SK-N-SH (cell line): ENCODE measurements at regions of chr2 and their contacts with region 1.

Region 1: GRCh38 chr2:26846328-26847306 is 1.3 kb upstream of the DPYSL5 start:
- DNase-seq: peak; percentile 86
- H3K4me3 ChIP-seq: peak overlapping the region; percentile 18 to 61; a peak in 2 of 4 replicates
- H3K27ac ChIP-seq: no peak overlapping the region
- H3K4me1 ChIP-seq: peaks cover 0 to 30% of the 10 kb centered on the region in 2 experiments; a peak in 2 of 4 replicates
- H3K27me3 ChIP-seq: peaks cover 79% of the 10 kb centered on the region
- CTCF ChIP-seq: peak; percentile 91
- EP300 ChIP-seq: no peak
- RAD21 ChIP-seq: peak; percentile 98

Region 2: DNA sequence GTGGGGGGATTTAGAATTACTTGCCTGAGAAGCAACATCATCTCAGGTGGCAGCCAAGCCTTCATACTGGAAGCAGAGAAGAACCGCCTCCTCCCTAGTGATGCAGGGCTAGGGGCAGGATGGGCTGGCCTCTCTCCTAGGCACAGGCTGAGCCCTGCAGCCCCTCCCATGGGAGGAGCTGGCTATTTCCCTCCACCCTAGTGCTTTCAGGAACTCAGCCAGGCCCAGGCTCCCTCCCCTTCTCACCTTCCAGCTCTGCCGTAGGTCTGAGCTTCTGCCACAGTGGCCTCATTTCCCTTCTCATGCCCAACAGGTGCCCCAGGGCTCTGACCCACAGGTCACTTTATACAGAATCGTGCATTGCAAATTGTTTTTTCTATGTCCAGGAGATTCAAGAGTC is 29.7 kb before region 1 on chr2:
- CTCF ChIA-PET with region 1: interaction called, 23 read pairs
- POLR2A ChIA-PET with region 1: no interaction called
- DNase-seq: peak; percentile 51
- H3K4me3 ChIP-seq: no peak overlapping the region
- H3K27ac ChIP-seq: no peak overlapping the region
- H3K4me1 ChIP-seq: no peaks in the 10 kb centered on the region; a peak in 1 of 4 replicates
- H3K27me3 ChIP-seq: no peaks in the 10 kb centered on the region
- CTCF ChIP-seq: no peak
- EP300 ChIP-seq: no peak
- RAD21 ChIP-seq: no peak

Region 3: GRCh38 chr2:26911911-26912861 is 65.6 kb after region 1 on chr2:
- CTCF ChIA-PET with region 1: interaction called, 779 read pairs
- POLR2A ChIA-PET with region 1: interaction called, 43 read pairs
- DNase-seq: peak; percentile 83
- H3K4me3 ChIP-seq: peak overlapping the region in 1 of 2 experiments; percentile 19; a peak in 1 of 4 replicates
- H3K27ac ChIP-seq: peak overlapping the region in 1 of 2 experiments; percentile 98; a peak in 2 of 4 replicates
- H3K4me1 ChIP-seq: peaks cover 3 to 45% of the 10 kb centered on the region in 2 experiments; a peak in 3 of 4 replicates
- H3K27me3 ChIP-seq: peaks cover 32% of the 10 kb centered on the region; the same call in 1 of the 2 replicates
- CTCF ChIP-seq: no peak
- EP300 ChIP-seq: peak in 1 of 2 experiments; percentile 86; a peak in 2 of 4 replicates
- RAD21 ChIP-seq: peak; percentile 13; the same call in 1 of the 2 replicates

Region 4: DNA sequence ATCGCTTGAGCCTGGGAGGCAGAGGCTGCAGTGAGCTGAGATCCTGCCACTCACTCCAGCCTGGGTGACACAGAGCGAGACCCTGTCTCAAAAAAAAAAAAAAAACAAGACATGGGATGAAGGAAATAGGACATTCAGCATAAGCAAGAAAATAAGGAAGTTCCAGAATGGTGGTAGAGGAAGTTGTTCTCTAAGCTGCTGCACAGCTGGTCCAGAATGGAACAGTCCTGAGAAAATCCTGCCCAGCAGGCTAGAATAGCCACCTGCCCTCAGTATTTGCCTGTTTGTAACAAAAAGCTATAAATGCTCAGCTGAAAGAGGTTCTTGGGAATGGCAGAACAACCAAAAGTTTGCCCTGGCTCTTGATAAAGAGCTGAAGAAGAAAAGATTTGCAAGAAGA is 112.7 kb after region 1 on chr2:
- CTCF ChIA-PET with region 1: interaction called, 388 read pairs
- POLR2A ChIA-PET with region 1: interaction called, 3 read pairs
- DNase-seq: no peak
- H3K4me3 ChIP-seq: no peak overlapping the region
- H3K27ac ChIP-seq: no peak overlapping the region
- H3K4me1 ChIP-seq: peaks cover 0 to 3% of the 10 kb centered on the region in 2 experiments; a peak in 1 of 4 replicates
- H3K27me3 ChIP-seq: peaks cover 48% of the 10 kb centered on the region
- CTCF ChIP-seq: no peak
- EP300 ChIP-seq: no peak
- RAD21 ChIP-seq: no peak

Region 5: DNA sequence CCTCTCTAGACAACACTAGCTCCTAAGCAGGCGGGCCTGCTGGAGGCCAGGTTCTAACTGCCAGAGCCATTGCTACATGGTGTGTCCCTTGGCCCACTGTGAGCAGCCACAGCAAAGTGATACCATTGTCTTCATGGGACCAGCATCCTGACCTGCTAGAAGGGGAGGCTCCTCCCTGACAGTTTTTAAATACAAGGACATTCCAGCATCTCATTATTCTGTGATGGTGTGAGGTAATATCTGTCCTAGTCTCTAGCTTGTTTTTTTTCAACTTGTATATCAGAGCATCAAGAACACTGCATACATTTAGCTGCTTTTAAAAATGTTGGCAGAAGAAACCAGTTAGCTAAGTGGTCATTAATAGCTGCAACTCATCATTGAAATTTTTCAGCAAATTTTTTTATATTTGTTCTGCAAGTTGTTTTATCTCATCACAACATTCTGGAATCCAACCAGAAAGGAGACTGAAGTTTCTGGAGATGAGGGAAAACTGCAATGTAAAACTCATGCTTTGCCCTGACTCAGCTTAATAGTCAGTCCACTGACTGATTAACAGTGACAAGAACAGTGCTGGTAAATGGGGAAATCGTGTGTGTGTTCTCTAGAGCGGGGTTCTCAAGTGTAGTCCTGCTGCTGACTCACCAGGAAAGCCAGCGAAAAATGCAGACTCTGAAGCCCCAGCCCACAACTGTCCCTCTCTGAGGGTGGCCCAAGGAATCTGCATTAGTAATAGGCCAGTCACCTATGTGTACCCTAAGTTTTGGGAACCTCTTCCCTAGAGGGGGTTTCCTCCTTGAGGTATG is 141.6 kb after region 1 on chr2:
- CTCF ChIA-PET with region 1: interaction called, 16 read pairs
- POLR2A ChIA-PET with region 1: no interaction called
- DNase-seq: no peak
- H3K4me3 ChIP-seq: no peak overlapping the region
- H3K27ac ChIP-seq: peak overlapping the region in 1 of 2 experiments; percentile 72; a peak in 2 of 4 replicates
- H3K4me1 ChIP-seq: peaks cover 0 to 17% of the 10 kb centered on the region in 2 experiments; a peak in 3 of 4 replicates
- H3K27me3 ChIP-seq: no peaks in the 10 kb centered on the region
- CTCF ChIP-seq: no peak
- EP300 ChIP-seq: peak in 1 of 2 experiments; percentile 83; a peak in 1 of 4 replicates
- RAD21 ChIP-seq: no peak

Region 6: GRCh38 chr2:27024188-27024587 is 177.6 kb after region 1 on chr2:
- CTCF ChIA-PET with region 1: interaction called, 86 read pairs
- POLR2A ChIA-PET with region 1: interaction called, 3 read pairs
- DNase-seq: peak; percentile 53
- H3K4me3 ChIP-seq: no peak overlapping the region
- H3K27ac ChIP-seq: no peak overlapping the region
- H3K4me1 ChIP-seq: peaks cover 0 to 8% of the 10 kb centered on the region in 2 experiments; a peak in 1 of 4 replicates
- H3K27me3 ChIP-seq: no peaks in the 10 kb centered on the region
- CTCF ChIP-seq: peak; percentile 20
- EP300 ChIP-seq: no peak
- RAD21 ChIP-seq: no peak

Region 7: GRCh38 chr2:27191053-27191829 is 344.6 kb after region 1 on chr2:
- CTCF ChIA-PET with region 1: interaction called, 11 read pairs
- POLR2A ChIA-PET with region 1: no interaction called
- DNase-seq: peak; percentile 84
- H3K4me3 ChIP-seq: no peak overlapping the region
- H3K27ac ChIP-seq: no peak overlapping the region
- H3K4me1 ChIP-seq: no peaks in the 10 kb centered on the region
- H3K27me3 ChIP-seq: no peaks in the 10 kb centered on the region
- CTCF ChIP-seq: peak; percentile 95
- EP300 ChIP-seq: 0 out of 4 replicates have a peak, but pooled peaks of 1 of the 2 experiments have one; percentile 20
- RAD21 ChIP-seq: peak; percentile 98

Region 8: DNA sequence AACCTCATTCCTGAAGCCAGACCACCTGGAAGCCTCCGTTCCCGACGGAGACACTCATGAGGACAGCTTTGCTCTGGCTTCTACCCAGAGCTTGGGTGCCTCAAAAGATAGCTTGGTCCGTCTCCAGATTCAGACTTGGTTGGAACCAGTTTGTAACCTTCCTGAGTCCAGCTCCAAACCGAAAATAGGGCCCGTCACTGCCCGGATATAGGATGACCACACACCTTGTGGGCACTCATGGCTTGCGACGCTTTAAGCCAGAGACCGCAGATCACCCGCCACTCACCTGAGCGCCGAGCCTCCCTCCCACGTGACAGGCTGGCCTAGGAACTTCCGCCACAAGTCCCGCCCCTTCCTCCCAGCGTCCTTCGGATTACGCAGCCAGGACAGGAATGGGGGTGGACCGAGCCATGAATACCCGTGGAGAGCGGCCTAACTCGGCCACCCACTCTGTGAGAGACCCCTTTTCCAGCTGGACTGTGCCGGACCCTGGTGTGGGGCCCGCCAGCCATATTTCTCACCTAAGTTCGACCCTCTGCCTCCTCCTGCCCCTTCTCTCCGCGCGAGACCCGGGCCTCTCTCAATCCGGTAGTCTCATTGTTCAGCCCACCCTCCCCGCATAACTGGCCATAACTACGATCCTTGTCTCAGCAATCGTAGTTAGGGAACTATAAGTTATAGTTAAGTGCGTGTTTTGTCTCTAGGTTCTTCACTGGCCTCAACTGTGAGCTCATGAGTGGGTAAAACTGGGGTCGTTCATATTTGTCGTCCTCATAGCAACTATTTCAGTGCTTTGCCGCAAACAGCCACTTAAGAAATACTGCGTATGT is 476.4 kb after region 1 on chr2 and contains the start of gene MPV17:
- CTCF ChIA-PET with region 1: no interaction called
- POLR2A ChIA-PET with region 1: no interaction called
- DNase-seq: peak; percentile 98
- H3K4me3 ChIP-seq: peak within 1 kb of the TSS; percentile 76 to 93
- H3K27ac ChIP-seq: peak within 1 kb of the TSS; percentile 90 to 98
- H3K4me1 ChIP-seq: peaks cover 9 to 23% of the 10 kb centered on the region in 2 experiments; a peak in 3 of 4 replicates
- H3K27me3 ChIP-seq: no peaks in the 10 kb centered on the region
- CTCF ChIP-seq: no peak
- EP300 ChIP-seq: no peak
- RAD21 ChIP-seq: no peak
- polyA plus RNA-seq, gene MPV17: 255 and 265 TPM in 2 replicates